ENCODE measurements at regions of chr4 and their contacts with region 1.

Region 1: DNA sequence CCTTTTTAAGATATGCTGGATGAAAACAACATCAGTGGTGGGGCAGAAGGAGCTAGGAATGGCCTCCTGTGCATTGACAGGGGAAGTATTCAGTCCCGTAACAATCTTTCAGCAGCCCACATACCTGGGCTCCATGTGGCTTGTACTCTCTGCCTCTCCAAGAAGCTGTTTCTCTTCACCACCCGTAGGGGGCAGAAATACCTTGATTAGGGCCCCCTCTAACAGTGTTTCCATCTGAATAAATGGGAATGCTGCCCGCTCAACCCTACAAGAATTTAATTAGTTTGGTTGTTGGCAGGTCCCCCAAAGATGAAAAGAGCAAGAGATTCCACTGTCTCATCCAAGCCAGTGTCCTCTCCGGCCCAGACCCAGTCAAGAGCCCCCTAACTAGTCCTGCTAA is 155.2 kb downstream of the SMIM20 start:
- DNase-seq: peak; percentile 47
- ATAC-seq: peak; percentile 68
- H3K4me3 ChIP-seq: no peak overlapping the region
- H3K27ac ChIP-seq: no peak overlapping the region
- H3K4me1 ChIP-seq: no peaks in the 10 kb centered on the region
- H3K27me3 ChIP-seq: no peaks in the 10 kb centered on the region
- CTCF ChIP-seq: peak; percentile 55
- POLR2A ChIP-seq: no peak
- RAD21 ChIP-seq: peak; percentile 69

Region 2: GRCh38 chr4:26088433-26088928 is 19.3 kb after region 1 on chr4:
- CTCF ChIA-PET with region 1: no interaction called
- POLR2A ChIA-PET with region 1: interaction called, 14 read pairs
- dilution Hi-C with region 1: no loop called
- in situ Hi-C with region 1: no loop called
- intact Hi-C with region 1: no loop called
- DNase-seq: peak; percentile 78
- ATAC-seq: peak; percentile 77
- H3K4me3 ChIP-seq: no peak overlapping the region
- H3K27ac ChIP-seq: peak overlapping the region; percentile 72; the same call in 1 of the 2 replicates
- H3K4me1 ChIP-seq: peaks cover 18% of the 10 kb centered on the region
- H3K27me3 ChIP-seq: no peaks in the 10 kb centered on the region
- CTCF ChIP-seq: no peak
- POLR2A ChIP-seq: no peak
- RAD21 ChIP-seq: no peak

Region 3: GRCh38 chr4:26325191-26325590 is 256.0 kb after region 1 on chr4:
- CTCF ChIA-PET with region 1: interaction called, 5 read pairs
- POLR2A ChIA-PET with region 1: interaction called, 14 read pairs
- dilution Hi-C with region 1: no loop called
- in situ Hi-C with region 1: no loop called
- intact Hi-C with region 1: loop called (anchors 5 kb)
- DNase-seq: peak; percentile 67
- ATAC-seq: no peak
- H3K4me3 ChIP-seq: no peak overlapping the region
- H3K27ac ChIP-seq: no peak overlapping the region
- H3K4me1 ChIP-seq: peaks cover 9% of the 10 kb centered on the region
- H3K27me3 ChIP-seq: no peaks in the 10 kb centered on the region
- CTCF ChIP-seq: peak; percentile 61
- POLR2A ChIP-seq: no peak
- RAD21 ChIP-seq: peak; percentile 65

Region 4: DNA sequence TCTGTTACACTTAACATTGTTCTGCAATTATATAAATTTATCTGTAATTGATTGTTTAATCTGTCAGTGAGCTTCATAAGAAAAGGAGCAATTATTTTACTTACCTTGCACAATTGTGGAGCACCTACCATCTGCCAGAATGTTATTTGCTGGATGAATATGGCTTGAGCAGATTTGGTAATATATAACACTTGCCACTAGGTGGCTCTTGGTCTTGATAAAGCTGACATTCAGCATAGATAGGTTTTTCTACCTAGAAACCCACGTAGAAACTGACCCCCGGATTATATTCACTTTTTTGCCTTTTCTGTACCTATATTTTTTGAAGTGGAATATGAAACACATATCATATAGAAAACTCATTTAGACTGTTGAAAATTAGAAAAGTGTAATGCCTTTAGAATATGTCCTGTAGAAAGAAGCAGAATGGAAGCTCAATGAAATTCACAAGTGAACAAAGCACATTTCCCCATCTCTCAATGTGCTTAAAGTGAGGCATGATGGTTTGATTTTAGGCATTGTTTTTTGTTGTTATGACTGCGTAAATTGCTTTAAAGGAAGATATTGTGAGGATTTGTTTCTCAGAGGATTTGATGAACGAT is 261.1 kb after region 1 on chr4:
- CTCF ChIA-PET with region 1: no interaction called
- POLR2A ChIA-PET with region 1: interaction called, 14 read pairs
- dilution Hi-C with region 1: no loop called
- in situ Hi-C with region 1: no loop called
- intact Hi-C with region 1: loop called (anchors 5 kb)
- DNase-seq: peak; percentile 68
- ATAC-seq: no peak
- H3K4me3 ChIP-seq: no peak overlapping the region
- H3K27ac ChIP-seq: no peak overlapping the region
- H3K4me1 ChIP-seq: peaks cover 13% of the 10 kb centered on the region
- H3K27me3 ChIP-seq: no peaks in the 10 kb centered on the region
- CTCF ChIP-seq: peak; percentile 61
- POLR2A ChIP-seq: no peak
- RAD21 ChIP-seq: peak; percentile 67

Region 5: DNA sequence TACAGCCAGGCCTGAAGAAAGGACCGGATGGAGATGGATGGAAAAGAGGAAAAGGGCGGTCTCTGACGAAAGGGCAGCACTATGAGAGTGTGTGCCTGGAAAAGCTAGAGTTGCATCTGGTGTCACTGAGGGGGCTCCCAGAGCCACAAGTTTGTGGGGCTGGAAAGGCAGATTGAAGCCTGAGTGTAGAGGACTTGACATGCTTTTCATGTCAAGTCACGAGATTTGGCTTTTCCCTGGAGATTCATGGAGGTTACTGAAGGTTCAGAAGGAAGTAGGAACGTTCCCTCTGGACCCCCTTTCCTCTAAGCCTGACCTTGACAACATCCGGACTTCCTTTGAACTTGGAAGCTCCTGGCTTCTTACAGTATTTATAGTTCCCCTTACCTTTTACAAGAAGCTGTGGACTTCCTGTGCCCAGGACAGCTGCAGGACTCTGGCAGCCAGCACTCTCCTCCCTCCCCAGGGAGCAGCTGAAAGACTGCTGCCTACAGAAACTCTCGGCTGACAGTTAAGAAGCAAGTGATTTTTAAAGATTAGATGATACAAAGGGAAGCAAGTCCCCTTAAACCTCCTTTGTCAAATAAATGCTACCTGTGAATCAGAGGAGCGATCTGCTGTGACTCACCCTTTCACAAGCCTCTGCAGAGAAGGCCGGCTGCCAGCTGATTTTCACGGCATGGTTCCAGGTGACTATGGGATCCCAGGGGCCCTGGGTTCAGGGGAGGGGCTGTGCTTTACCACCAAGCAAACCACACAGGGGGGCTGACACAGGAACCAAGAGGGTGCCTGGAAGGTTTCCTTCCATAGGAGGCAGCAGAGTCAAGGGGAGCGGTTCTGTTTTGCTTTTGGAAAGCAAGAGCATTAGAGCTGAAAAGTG is 718.5 kb after region 1 on chr4:
- CTCF ChIA-PET with region 1: no interaction called
- POLR2A ChIA-PET with region 1: no interaction called
- dilution Hi-C with region 1: no loop called
- in situ Hi-C with region 1: no loop called
- intact Hi-C with region 1: no loop called
- DNase-seq: peak; percentile 76
- ATAC-seq: peak; percentile 54
- H3K4me3 ChIP-seq: no peak overlapping the region
- H3K27ac ChIP-seq: no peak overlapping the region
- H3K4me1 ChIP-seq: peaks cover 9% of the 10 kb centered on the region
- H3K27me3 ChIP-seq: no peaks in the 10 kb centered on the region
- CTCF ChIP-seq: no peak
- POLR2A ChIP-seq: no peak
- RAD21 ChIP-seq: peak; percentile 31

Measured in IMR-90 (cell line).